Activated T-helper 1 cell treated with anti-CD3 and anti-CD28 coated beads, Interleukin-12 subunit alpha, Interleukin-12 subunit beta, Interleukin-2, Interleukin-4 antibody, amounts not matched to agents 30 ng/mL and 10 ng/mL and 1 ng/mL, durations not matched to agents 14 hours and 24 hours and 36 hours (primary cell): ENCODE measurements at regions of chr6 and their contacts with region 1.

Region 1: GRCh38 chr6:76861403-76861802 is 601.9 kb downstream of the HTR1B start:
- DNase-seq: no peak
- H3K4me3 Mint-ChIP-seq: no peak overlapping the region
- H3K27ac Mint-ChIP-seq: no peak overlapping the region
- H3K4me1 Mint-ChIP-seq: no peaks in the 10 kb centered on the region
- H3K27me3 Mint-ChIP-seq: no peaks in the 10 kb centered on the region

Region 2: DNA sequence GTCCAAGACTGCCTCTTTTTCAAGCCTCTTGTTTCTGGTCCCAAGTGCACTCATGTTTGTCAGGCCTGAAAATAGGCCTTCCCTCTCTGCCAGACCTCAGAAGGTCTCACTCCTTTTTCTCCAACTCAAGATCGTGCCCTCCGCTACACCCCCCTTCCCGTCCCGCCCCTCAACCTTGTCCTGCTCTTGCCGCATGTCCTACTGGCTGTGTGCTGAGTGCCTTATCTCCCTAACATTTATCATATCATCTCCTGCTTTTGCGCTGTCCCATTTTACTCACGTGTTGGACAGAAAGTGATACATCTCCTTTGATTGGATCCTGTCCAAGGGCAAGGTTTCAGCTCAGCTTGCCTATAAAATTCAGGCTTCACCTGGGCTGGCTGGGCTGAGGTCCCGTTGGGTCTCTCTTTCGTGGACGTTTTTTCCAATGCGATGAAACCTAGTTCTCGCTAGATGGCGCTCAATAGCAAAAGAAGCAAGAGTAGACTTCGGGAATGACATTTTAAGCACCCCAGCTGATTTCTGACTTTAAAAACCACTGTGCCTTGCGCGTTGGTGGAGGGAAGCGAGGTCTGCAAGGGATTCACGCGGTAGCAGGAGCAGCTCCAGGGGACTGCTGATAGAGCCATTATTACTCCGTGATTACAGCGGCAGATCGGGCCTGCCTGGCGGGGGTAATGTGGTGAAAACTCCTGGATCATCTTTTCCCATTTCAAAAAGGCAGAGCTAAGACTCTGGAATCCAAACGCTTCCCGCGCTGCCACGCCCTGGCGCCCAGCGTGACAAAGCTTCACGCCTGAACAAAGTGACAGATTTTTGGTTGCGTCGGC is 926.5 kb before region 1 on chr6:
- intact Hi-C with region 1: loop called (anchors 2 kb)
- DNase-seq: no peak
- H3K4me3 Mint-ChIP-seq: no peak overlapping the region
- H3K27ac Mint-ChIP-seq: no peak overlapping the region
- H3K4me1 Mint-ChIP-seq: no peaks in the 10 kb centered on the region
- H3K27me3 Mint-ChIP-seq: peaks cover 9% of the 10 kb centered on the region